ENCODE measurements at regions of chr5 and their contacts with region 1.

Region 1: DNA sequence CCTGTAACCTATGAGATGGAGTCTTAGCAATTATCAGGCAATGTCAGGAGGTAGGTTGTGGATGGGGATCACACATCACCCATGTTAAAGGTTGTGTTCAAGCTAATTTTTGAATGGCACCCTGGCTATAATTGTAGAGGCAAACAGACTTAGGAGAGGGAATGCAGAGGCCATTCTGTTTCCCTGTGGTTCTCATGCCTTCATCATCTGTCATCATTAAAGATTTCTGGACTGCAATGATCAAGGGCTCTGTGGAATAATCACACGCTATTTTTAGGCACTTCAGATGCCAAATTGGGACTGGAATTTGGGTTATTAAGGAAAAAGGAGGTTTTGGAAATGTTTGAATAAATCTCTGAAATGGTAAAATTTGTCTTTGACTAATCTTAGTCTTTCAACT is 1065.4 kb downstream of the TAF11L14 start:
- DNase-seq: no peak
- H3K4me3 Mint-ChIP-seq: no peak overlapping the region
- H3K27ac Mint-ChIP-seq: no peak overlapping the region
- H3K4me1 Mint-ChIP-seq: peaks cover 16% of the 10 kb centered on the region
- H3K27me3 Mint-ChIP-seq: no peaks in the 10 kb centered on the region

Region 2: DNA sequence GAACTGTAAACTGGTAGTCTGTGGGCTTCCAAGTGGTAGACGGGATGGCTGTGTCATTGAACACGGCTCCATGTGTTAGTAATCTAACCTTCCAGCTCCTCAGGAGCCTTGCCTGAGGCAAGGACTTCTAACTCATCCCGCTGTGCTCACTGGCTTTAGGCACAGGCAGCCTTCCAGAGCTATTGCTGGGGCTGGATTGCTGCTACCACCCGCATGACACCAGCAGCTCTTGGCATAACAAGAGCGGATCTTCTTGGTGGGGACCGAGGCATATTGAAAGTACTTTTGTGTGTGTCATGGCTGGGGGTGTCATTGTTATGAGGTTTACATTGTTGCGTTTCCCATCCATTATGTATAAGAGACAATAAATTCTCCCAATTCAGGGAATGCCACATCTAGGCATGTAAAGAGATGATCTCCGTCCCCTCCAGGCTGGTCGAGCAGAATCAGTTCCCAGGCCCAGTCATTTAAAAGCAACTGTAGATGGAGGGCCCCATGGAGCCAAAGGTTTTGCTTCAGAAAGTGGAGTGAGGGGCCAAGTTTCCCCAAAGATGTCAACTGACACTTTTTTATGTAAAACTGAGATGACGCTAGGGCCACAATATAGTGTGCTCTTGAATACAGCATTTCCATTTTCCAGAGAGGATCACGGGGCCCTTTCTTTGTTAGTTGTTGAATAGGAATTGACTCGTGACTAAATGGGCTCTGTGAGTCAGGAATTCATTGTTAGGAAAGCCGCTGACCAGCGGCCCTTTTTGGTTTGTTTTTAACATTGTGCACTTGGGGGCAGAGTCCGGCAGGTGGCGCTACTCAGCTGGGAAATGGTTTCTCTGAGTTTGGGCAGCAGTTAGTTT is 305.9 kb before region 1 on chr5:
- intact Hi-C with region 1: loop called (anchors 1 kb)
- DNase-seq: peak; percentile 81
- H3K4me3 Mint-ChIP-seq: no peak overlapping the region
- H3K27ac Mint-ChIP-seq: no peak overlapping the region
- H3K4me1 Mint-ChIP-seq: no peaks in the 10 kb centered on the region
- H3K27me3 Mint-ChIP-seq: no peaks in the 10 kb centered on the region

Region 3: DNA sequence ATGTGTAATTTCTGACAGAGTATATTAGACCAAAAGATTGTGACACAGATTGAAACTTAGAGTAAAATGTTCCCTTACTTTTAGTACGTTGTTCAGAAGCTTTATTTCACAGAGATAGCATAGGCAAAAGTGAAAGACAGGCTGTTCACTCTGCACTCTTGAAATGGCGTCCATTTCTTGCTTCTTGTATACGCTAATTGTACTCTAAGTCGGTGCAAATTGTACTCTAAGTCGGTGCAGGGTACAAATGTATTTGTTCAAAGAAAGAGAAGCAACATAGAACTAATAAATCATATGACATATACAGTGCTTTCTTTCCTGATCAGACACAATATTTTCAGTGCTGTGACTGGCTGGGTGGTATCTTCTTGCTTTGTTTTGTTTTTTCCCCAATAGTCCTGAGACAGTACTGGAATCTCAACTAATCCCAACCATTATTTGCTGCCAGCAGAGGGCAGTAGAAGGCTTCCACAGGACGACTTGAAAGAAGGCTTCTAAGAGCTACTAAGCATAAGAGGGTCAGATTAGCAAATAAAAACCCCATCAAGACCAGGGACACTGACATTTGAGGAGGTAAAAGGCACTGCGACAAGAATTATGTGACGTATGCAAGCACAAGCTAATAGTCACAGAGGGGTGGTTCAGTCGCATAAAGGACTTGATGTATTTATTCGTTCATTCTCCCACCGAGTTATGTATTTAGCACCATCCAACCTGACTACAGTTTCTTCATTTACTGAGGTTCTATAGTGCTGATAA is 233.7 kb before region 1 on chr5:
- intact Hi-C with region 1: loop called (anchors 1 kb)
- DNase-seq: peak; percentile 82
- H3K4me3 Mint-ChIP-seq: no peak overlapping the region
- H3K27ac Mint-ChIP-seq: no peak overlapping the region
- H3K4me1 Mint-ChIP-seq: no peaks in the 10 kb centered on the region
- H3K27me3 Mint-ChIP-seq: no peaks in the 10 kb centered on the region

Region 4: DNA sequence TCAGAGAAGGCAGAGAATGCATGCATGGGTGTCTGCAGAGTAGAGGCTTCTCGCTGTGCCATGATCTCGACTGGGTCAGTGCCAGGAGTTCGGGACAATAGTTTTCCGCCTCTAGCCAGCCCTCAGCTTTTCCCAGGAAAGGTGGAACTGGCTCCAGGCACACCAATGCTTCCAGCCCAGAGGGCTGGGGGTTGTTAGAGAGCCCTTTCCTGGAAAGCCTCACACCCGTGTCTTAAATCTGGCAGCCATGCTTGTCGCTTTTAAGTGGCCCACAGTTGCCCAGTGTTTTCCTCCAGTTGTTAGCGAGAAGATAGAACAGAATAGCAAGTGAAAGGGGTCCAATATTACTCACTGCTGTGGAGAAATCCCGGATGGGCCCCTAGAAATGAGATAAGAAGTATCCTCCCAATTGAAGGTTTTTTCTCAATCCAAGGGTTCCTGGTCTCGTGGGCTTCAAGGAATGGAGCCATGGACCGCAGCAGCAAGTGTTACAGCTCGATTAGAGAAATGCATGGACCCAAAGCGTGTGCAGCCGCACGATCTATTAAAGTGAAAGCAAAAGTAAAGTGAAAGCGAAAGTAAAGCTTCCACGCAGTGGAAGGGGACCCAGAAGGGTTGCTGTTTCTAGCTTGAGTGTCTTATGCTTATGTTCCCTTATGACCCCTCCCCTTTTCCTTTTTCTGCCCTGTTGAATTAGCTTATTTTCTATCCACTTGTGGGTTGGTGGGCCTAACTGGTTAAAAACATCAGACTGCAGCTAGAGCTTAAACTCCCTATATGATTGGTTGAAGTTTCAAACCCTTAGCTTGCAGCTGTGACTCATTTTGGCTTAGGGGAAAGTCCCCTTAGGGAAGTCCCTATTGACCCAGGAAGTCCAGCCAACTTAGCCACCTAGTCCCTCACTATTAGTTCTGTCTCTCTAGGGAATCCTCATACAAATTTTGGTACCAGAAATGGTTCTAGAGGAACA is 46.2 kb after region 1 on chr5:
- intact Hi-C with region 1: loop called (anchors 1 kb)
- DNase-seq: peak; percentile 85
- H3K4me3 Mint-ChIP-seq: peak overlapping the region; percentile 87
- H3K27ac Mint-ChIP-seq: peak overlapping the region; percentile 87
- H3K4me1 Mint-ChIP-seq: peaks cover 55% of the 10 kb centered on the region
- H3K27me3 Mint-ChIP-seq: no peaks in the 10 kb centered on the region

Region 5: DNA sequence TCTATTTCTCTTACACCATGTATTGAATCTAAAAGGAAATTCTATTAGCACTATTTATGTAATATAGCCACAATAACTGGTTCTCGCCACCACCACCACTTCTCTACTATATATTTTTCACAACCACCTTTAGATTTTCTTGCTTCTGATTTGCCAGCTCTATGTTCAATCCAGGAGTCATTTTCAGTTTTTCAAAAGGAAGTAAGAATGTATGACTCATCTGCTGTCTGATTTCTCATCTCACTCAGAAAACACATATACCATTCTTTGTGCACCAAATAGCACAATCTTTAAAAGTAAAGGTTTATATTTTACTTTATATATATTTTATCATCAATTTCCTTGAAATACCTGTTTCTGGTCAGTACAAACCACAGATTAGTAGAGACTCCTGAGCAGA is 62.1 kb after region 1 on chr5:
- intact Hi-C with region 1: loop called (anchors 1 kb)
- DNase-seq: no peak
- H3K4me3 Mint-ChIP-seq: no peak overlapping the region
- H3K27ac Mint-ChIP-seq: no peak overlapping the region
- H3K4me1 Mint-ChIP-seq: peaks cover 3% of the 10 kb centered on the region
- H3K27me3 Mint-ChIP-seq: peaks cover 4% of the 10 kb centered on the region

Region 6: DNA sequence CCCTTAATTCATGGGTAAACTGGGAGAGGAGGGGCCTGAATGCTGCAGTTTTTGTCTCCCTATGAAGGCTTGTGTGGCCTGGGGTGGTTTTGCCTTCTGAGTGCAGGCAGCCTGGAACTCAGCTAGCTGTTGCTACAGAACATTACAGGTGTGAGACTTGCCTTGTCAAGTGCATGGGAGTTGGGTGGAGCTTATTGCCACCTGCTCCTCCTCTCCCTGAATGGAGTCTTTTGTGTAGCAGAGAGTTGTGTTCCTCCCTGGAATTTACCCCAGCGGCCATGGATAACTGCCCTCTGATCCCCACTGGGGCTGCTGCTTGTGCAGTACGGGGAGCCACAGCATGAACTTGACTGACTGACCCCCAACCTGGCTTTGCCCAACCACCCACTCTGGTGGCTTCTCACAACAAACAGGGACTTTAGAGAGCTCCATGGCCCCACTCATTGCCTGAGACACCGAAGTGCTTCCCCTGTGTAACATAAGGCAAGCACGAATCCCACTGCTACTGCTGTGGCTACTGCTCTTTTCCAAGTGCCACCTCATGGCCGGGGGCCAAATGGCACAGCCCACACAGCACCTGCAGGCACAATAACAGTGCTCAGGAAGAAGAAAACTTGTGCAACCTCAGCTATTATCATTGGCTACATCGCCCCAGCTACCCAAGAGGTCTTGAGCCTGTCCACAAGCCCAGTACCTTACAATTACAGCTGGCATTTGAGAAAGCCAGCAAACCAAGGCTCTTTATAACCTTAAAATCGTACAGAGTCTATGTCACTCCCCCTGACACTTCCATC is 345.4 kb after region 1 on chr5:
- intact Hi-C with region 1: no loop called
- DNase-seq: no peak
- H3K4me3 Mint-ChIP-seq: no peak overlapping the region
- H3K27ac Mint-ChIP-seq: no peak overlapping the region
- H3K4me1 Mint-ChIP-seq: no peaks in the 10 kb centered on the region
- H3K27me3 Mint-ChIP-seq: no peaks in the 10 kb centered on the region